HepG2 (cell line): ENCODE measurements at regions of chr2 and their contacts with region 1.

Region 1: GRCh38 chr2:239401067-239401880 is 454 bp upstream of the HDAC4 start:
- DNase-seq: peak; percentile 97
- ATAC-seq: peak; percentile 97
- H3K4me3 ChIP-seq: peak overlapping the region; percentile 62 to 86 (median 67)
- H3K27ac ChIP-seq: peak overlapping the region; percentile 97
- H3K4me1 ChIP-seq: peaks cover 39% of the 10 kb centered on the region
- H3K27me3 ChIP-seq: peaks cover 1 to 5% of the 10 kb centered on the region in 2 experiments; a peak in 3 of 5 replicates
- CTCF ChIP-seq: no peak; the same call in 1 of the 2 replicates
- EP300 ChIP-seq: peak in 1 of 2 experiments; percentile 51; a peak in 2 of 4 replicates
- POLR2A ChIP-seq: peak in 1 of 2 experiments; percentile 97; a peak in 2 of 4 replicates
- RAD21 ChIP-seq: peak; percentile 87

Region 2: DNA sequence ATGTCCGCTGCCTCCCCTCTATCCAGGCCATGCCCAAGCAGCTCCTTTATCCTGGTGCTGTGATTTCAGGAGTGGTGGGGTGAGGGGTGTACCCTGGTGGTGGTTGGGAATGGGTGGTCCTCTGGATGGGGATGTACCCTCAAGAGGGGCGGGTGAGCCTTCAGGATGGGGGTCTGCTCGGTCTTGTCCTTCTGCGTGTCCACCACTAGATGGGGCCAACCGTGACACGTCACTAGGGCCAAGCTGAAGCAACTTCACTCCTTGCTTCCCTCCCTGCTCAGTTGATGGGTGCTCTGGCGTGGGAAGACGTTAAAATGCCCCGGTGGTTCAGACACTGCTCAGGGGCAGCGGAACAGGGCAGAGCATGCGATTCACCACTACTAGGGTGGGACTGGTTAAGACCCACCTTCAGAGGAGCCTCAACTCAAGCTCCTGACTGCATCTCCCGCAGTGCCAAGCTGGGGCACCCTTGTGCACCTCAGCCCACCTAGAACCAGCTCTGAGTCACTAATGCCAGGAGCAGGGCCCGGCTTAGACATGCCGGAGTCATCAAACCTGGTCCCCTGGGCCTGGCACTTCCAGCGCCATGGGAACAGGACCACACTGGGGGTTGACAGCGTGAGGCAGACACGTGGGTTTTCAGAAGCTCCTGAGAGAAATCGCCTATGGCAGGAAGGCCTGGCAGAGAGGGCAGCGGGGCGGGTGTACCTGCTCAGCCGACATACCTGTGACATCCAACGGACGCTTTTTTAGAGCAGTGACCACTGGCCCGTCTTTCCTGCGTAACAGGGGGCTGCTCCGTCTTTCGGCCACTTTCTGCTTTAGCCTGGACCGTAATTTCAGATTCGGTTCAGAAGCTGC is 257.2 kb before region 1 on chr2:
- CTCF ChIA-PET with region 1: interaction called, 6 read pairs
- POLR2A ChIA-PET with region 1: no interaction called
- in situ Hi-C with region 1: loop called (anchors 5 kb)
- intact Hi-C with region 1: loop called (anchors 1 kb)
- DNase-seq: peak; percentile 28
- ATAC-seq: peak; percentile 79
- H3K4me3 ChIP-seq: no peak overlapping the region
- H3K27ac ChIP-seq: no peak overlapping the region
- H3K4me1 ChIP-seq: peaks cover 12% of the 10 kb centered on the region
- H3K27me3 ChIP-seq: no peaks in the 10 kb centered on the region
- CTCF ChIP-seq: peak; percentile 88
- EP300 ChIP-seq: no peak
- POLR2A ChIP-seq: no peak
- RAD21 ChIP-seq: peak; percentile 72

Region 3: GRCh38 chr2:239149501-239149900 is 251.8 kb before region 1 on chr2:
- CTCF ChIA-PET with region 1: interaction called, 6 read pairs
- POLR2A ChIA-PET with region 1: no interaction called
- in situ Hi-C with region 1: loop called (anchors 5 kb)
- intact Hi-C with region 1: loop called (anchors 1 kb)
- DNase-seq: no peak
- ATAC-seq: no peak
- H3K4me3 ChIP-seq: no peak overlapping the region
- H3K27ac ChIP-seq: no peak overlapping the region
- H3K4me1 ChIP-seq: peaks cover 6% of the 10 kb centered on the region
- H3K27me3 ChIP-seq: no peaks in the 10 kb centered on the region
- CTCF ChIP-seq: no peak
- EP300 ChIP-seq: no peak
- POLR2A ChIP-seq: no peak
- RAD21 ChIP-seq: no peak

Region 4: GRCh38 chr2:239223310-239224198 is 177.7 kb before region 1 on chr2:
- CTCF ChIA-PET with region 1: no interaction called
- POLR2A ChIA-PET with region 1: interaction called, 3 read pairs
- in situ Hi-C with region 1: no loop called
- intact Hi-C with region 1: loop called (anchors 1 kb)
- DNase-seq: peak; percentile 79
- ATAC-seq: peak; percentile 95
- H3K4me3 ChIP-seq: peak overlapping the region; percentile 48 to 68 (median 51); a peak in 5 of 6 replicates
- H3K27ac ChIP-seq: peak overlapping the region; percentile 59
- H3K4me1 ChIP-seq: peaks cover 30% of the 10 kb centered on the region
- H3K27me3 ChIP-seq: no peaks in the 10 kb centered on the region
- CTCF ChIP-seq: no peak
- EP300 ChIP-seq: peak in 1 of 2 experiments; percentile 57; a peak in 3 of 4 replicates
- POLR2A ChIP-seq: peak in 1 of 2 experiments; percentile 22; a peak in 1 of 4 replicates
- RAD21 ChIP-seq: no peak

Region 5: DNA sequence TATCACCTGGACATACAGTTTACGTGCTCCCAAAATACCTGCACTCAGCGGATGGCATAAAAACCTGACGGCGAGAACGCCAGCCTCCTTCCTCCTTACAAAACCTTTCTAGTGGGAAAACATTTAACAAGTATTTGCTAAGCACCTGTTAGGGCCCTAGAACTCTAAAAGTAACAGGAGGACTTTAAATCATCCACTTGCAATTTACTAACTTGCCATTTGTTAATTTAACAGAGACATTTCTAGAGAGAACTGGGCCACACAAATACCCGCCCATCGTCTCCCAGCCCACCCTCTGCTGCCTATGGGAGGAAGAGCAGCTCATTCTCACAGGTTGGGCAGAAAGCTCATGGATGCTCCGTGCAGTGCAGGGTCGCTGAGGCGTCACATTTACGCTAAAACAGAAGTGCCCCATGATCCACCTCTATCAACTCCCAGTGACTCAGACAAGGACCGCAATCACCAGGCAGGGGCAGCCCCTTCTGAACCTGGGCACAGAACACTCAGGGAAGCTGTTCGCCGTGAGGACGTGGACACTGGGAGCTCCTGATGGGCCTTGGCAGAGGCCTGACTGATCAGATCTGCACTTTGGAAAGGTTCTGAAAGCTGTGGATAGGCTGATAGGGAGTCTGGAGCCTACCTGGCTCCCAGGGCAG is 107.4 kb before region 1 on chr2:
- CTCF ChIA-PET with region 1: no interaction called
- POLR2A ChIA-PET with region 1: interaction called, 23 read pairs
- in situ Hi-C with region 1: no loop called
- intact Hi-C with region 1: loop called (anchors 10 kb)
- DNase-seq: no peak
- ATAC-seq: no peak
- H3K4me3 ChIP-seq: no peak overlapping the region
- H3K27ac ChIP-seq: no peak overlapping the region
- H3K4me1 ChIP-seq: peaks cover 57% of the 10 kb centered on the region
- H3K27me3 ChIP-seq: no peaks in the 10 kb centered on the region
- CTCF ChIP-seq: no peak
- EP300 ChIP-seq: no peak
- POLR2A ChIP-seq: no peak
- RAD21 ChIP-seq: no peak

Region 6: DNA sequence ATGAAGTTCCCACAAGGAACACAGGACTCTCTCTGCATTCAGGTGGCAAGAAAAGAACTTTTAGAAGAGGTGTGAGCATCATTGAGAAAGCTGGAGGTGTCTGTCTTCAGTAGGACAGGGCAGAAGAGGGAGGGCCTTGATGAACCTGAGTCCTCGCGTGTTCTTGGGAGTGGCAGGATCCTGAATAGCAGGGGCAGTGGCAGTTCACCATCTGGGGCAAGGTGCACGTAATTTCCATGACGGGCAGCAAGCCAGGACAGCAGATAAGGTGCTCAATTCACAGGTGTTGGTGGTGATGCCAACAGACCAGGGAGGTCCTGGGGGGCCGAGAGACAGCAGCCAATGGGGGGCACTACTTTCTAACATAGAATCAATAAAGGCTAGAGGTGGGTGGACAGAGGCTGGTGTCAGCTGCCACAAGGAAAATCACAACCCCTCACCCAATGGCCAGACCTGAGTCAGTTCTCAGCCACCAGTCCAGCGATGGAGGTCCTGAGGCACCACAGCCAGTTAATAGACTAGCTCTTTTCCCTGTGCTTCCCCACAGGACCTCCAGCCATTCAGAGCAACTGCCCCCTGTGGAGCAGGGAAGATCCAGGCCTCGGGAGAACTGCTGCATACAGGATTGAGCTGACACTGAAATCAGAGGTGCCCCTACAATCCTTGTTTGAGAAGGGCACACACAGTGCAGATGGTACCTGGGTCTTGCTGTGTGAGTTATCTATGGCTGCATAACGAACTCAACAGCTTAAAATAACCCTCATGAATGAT is 10.5 kb after region 1 on chr2:
- CTCF ChIA-PET with region 1: no interaction called
- POLR2A ChIA-PET with region 1: interaction called, 10 read pairs
- in situ Hi-C with region 1: no loop called
- intact Hi-C with region 1: no loop called
- DNase-seq: no peak
- ATAC-seq: no peak
- H3K4me3 ChIP-seq: no peak overlapping the region
- H3K27ac ChIP-seq: no peak overlapping the region
- H3K4me1 ChIP-seq: no peaks in the 10 kb centered on the region; the same call in 1 of the 2 replicates
- H3K27me3 ChIP-seq: peaks cover 7 to 64% of the 10 kb centered on the region in 2 experiments; a peak in 4 of 5 replicates
- CTCF ChIP-seq: no peak
- EP300 ChIP-seq: no peak
- POLR2A ChIP-seq: no peak
- RAD21 ChIP-seq: no peak

Region 7: GRCh38 chr2:239444626-239445625 is 43.7 kb after region 1 on chr2:
- CTCF ChIA-PET with region 1: no interaction called
- POLR2A ChIA-PET with region 1: interaction called, 34 read pairs
- in situ Hi-C with region 1: no loop called
- intact Hi-C with region 1: no loop called
- DNase-seq: peak; percentile 94
- ATAC-seq: peak; percentile 79
- H3K4me3 ChIP-seq: no peak overlapping the region
- H3K27ac ChIP-seq: peak overlapping the region; percentile 25
- H3K4me1 ChIP-seq: peaks cover 41% of the 10 kb centered on the region
- H3K27me3 ChIP-seq: peaks cover 0 to 7% of the 10 kb centered on the region in 2 experiments; a peak in 2 of 5 replicates
- CTCF ChIP-seq: no peak
- EP300 ChIP-seq: peak; percentile 56 to 85
- POLR2A ChIP-seq: no peak
- RAD21 ChIP-seq: no peak

Region 8: DNA sequence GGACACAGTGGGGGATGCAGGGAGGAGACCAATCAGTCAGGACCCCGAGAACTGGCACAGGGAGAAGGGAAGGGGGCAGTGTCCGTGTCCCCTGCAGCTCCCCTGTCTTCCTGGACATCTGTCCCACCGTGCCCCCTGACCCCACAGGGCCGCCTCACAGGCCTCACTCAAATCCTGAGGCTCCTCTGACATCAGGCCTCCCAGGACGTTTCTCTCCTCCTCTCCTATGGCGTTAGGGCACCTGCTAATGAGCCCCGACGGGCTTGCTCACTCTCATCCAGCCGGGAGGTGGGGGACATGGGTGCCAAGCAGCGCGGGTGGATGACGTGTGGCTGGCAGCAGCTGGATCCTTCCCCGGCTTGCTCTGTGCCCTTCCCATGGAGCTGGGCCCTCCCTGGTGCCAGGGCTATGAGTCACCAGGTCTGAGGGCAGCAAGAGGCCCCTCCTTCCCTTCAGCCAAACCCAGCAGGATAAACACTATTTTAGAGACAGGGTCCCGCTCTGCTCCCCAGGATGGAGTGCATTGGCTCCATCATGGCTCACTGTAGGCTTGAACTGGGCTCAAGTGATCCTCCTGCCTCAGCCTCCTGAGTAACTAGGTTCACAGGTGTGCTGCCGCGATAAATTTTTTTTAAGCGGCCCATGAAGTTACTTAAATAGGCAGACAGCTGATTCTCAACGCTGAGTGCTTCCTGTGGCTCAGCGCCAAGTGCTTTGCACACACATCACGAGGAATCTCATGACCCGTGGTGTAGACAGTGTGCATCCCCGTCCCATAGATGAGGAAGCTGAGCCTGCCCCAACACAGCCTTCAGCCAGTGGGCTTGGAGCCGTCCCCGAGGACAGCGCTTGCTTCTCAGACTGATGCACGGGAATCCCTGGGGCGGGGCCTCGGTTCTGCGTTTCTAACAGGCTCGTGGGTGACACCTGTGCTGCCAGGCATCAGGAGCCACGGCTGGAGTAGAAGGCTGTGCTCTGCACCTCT is 64.0 kb after region 1 on chr2:
- CTCF ChIA-PET with region 1: no interaction called
- POLR2A ChIA-PET with region 1: no interaction called
- in situ Hi-C with region 1: no loop called
- intact Hi-C with region 1: no loop called
- DNase-seq: no peak
- ATAC-seq: peak; percentile 6; the same call in 1 of the 3 replicates
- H3K4me3 ChIP-seq: no peak overlapping the region
- H3K27ac ChIP-seq: no peak overlapping the region
- H3K4me1 ChIP-seq: peaks cover 19% of the 10 kb centered on the region
- H3K27me3 ChIP-seq: peaks cover 2 to 30% of the 10 kb centered on the region in 2 experiments; a peak in 2 of 5 replicates
- CTCF ChIP-seq: no peak
- EP300 ChIP-seq: no peak
- POLR2A ChIP-seq: no peak
- RAD21 ChIP-seq: no peak